ENCODE measurements at regions of chr10 and their contacts with region 1.

Region 1: DNA sequence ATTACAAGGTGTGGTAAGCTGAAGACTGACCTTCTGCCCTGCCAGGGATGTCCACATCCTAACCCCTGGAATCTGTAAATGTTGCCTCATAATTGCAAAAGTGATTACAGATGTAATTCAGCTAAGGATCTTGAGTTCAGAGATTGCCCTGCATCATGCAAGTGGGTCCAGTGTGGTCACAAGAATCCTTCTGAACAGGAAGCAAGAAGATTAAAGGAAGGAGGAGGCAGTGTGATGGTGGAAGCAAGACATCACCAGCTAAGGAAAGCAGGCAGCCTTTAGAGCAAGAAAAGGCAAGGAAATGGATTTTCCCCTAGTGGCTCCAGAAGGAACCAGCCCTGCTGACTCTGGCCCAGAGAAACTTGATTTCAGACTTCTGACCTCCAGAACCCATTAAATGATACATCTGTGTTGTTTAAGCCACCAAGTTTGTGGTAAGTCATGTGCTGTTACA is 78.1 kb downstream of the USP6NL start:
- DNase-seq: no peak
- H3K4me3 ChIP-seq: no peak overlapping the region
- H3K27ac ChIP-seq: peak overlapping the region in 2 of 5 donors; percentile 7 to 30
- H3K4me1 ChIP-seq: peaks cover 10 to 38% of the 10 kb centered on the region in 2 donors
- H3K27me3 ChIP-seq: no peaks in the 10 kb centered on the region
- CTCF ChIP-seq: peak in 3 of 6 experiments; percentile 16 to 40 (median 18)
- POLR2A ChIP-seq: no peak

Region 2: DNA sequence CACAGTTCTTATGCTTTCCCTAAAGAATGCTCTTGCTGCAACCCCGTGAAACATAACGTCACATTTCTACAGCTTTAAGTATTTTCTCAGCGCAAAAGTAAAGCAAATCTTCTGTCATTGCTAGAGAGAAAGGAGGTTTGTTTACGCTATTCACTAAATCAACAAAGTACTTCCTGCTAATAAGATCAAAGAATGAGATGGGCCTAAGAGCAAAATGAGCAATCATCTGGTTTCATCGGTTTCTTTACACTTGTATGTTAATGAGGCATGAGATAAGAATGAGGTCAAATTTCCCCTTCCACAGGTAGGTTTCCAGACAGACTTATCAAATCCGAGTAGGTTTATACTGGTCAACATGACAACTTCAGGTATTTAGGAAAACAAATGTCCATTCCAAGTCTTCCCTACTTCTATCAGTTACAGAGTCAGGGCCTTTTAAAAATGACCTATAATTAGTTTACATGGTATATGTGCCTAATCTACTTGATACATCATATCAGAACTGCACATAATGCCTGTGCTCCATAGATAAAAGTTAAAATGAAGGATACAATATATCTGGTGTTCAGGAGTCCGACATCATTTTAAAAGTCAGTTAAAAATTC is 69.7 kb after region 1 on chr10:
- intact Hi-C with region 1: loop called in 1 of 2 experiments (anchors 10 kb)
- DNase-seq: no peak
- H3K4me3 ChIP-seq: no peak overlapping the region
- H3K27ac ChIP-seq: no peak overlapping the region
- H3K4me1 ChIP-seq: peaks cover 5 to 31% of the 10 kb centered on the region in 2 donors
- H3K27me3 ChIP-seq: no peaks in the 10 kb centered on the region
- CTCF ChIP-seq: no peak
- POLR2A ChIP-seq: no peak